ENCODE measurements at regions of chr2 and their contacts with region 1.

Region 1: DNA sequence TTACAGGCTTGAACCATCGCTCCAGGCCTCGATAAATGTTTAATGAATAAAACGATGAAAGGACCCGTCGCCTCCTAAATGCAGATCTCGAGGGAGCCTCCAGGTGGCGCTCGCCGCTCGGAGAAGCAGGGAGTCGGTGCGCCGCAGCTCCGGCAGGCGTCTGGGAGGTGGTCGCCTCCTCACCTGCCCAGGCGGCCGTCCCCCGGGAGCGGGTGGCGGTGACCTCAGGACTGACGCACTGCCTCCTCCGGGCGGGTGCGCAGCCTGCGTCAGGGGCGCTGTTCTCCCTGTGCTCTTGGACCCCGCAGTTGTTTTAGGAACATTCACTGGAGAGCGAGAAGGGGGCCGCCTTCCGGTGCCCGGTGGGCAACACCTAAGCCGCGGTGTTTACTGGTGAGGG is 38.6 kb upstream of the POLE4 start:
- DNase-seq: peak in 1 of 2 donors; percentile 88
- H3K4me3 ChIP-seq: no peak overlapping the region
- CTCF ChIP-seq: peak in 1 of 3 donors; percentile 9
- POLR2A ChIP-seq: no peak

Region 2: DNA sequence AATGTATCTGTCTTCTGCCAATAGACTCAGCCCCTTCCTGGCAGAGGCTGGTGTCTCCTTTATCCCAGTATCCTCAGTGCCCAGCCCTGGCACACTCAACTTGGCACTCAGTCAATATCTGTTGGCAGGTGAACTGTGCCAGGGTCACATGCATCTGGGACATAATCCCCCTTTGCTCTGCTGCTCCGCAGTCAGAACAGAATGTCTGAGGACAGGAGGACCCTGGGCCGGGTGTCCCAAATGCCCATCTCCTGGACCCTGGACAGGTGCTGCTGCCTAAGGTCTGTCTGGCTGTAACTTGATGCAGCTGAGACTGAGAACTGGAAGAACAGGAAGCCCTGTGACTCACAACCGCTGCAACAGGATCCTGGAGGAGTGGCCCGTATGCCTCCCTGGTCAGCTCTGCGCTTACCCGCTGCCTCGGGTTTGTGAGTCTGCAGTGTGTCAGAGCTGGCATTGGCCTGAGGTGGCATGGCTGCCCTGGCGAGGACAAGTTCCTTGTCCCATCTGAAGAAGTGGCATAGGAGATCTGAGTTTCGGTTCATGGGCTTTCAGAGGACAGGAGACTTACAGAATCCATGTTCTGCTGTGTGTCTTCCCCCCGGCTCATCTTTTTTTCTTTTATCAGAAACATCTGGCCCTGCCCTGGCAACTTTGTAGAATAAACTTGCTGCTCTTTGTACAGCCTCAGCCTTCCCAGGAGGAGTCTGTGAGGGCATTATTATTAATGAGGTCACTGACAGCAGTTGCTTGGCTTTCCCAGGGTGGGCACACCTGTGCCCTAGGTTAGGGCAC is 74.4 kb before region 1 on chr2:
- intact Hi-C with region 1: no loop called
- DNase-seq: peak; percentile 89 to 95
- H3K4me3 ChIP-seq: no peak overlapping the region
- CTCF ChIP-seq: no peak
- POLR2A ChIP-seq: no peak

Region 3: GRCh38 chr2:74876081-74876886 is 43.5 kb before region 1 on chr2:
- intact Hi-C with region 1: no loop called
- DNase-seq: peak; percentile 39 to 86
- H3K4me3 ChIP-seq: no peak overlapping the region
- CTCF ChIP-seq: no peak
- POLR2A ChIP-seq: no peak

Region 4: DNA sequence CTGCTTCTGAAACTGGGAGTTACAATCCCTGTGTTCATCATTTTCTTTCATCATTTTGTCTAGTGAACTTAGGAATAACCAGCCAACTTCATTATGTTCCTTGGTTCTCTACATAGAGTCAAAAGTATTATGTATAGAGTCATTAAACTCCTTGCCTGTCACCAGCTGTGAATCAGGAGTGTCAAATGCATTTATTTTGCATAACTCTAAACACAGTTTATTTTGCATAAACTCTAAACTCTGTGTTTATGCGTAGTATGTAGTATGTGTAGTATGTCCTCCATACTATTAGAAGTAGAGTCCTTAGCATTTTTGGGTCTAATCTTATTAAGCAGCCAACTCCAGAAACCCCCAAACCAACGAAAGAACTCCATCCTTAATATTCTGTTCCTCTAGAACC is 476.5 kb after region 1 on chr2:
- intact Hi-C with region 1: loop called (anchors 5 kb)
- DNase-seq: no peak
- H3K4me3 ChIP-seq: no peak overlapping the region
- CTCF ChIP-seq: no peak
- POLR2A ChIP-seq: no peak